Activated B cell treated with CpG ODN at 0.5 μM for 24 hours (primary cell): ENCODE measurements at regions of chr15 and their contacts with region 1.

Region 1: DNA sequence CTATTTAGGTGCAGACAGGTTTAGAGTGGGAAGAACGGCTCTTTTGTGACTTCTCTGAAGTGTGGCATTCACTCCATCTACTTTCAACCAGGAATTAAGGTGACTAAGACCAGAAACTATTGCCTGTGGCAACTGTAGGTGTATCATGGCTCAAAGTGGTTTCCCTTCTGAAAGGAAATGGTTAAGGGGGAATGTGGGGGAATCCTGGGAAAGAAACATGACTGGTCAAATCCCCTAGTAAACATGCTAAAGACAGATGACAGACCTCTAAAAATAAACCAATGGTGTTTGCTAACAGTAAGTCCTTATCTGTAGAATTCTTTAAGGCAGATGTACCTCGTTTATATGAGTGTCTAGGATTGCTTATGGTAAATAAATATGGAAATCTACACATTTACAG is 56.9 kb downstream of the MEGF11 start:
- DNase-seq: no peak
- ATAC-seq: no peak
- H3K4me3 Mint-ChIP-seq: no peak overlapping the region
- H3K27ac Mint-ChIP-seq: no peak overlapping the region
- H3K4me1 Mint-ChIP-seq: no peaks in the 10 kb centered on the region
- H3K27me3 Mint-ChIP-seq: peaks cover 10% of the 10 kb centered on the region
- CTCF ChIP-seq: no peak

Region 2: GRCh38 chr15:65655026-65655425 is 541.6 kb before region 1 on chr15:
- CTCF ChIA-PET with region 1: no interaction called
- POLR2A ChIA-PET with region 1: no interaction called
- intact Hi-C with region 1: no loop called
- DNase-seq: no peak
- ATAC-seq: no peak
- H3K4me3 Mint-ChIP-seq: no peak overlapping the region
- H3K27ac Mint-ChIP-seq: no peak overlapping the region
- H3K4me1 Mint-ChIP-seq: peaks cover 15% of the 10 kb centered on the region
- H3K27me3 Mint-ChIP-seq: no peaks in the 10 kb centered on the region
- CTCF ChIP-seq: no peak

Region 3: DNA sequence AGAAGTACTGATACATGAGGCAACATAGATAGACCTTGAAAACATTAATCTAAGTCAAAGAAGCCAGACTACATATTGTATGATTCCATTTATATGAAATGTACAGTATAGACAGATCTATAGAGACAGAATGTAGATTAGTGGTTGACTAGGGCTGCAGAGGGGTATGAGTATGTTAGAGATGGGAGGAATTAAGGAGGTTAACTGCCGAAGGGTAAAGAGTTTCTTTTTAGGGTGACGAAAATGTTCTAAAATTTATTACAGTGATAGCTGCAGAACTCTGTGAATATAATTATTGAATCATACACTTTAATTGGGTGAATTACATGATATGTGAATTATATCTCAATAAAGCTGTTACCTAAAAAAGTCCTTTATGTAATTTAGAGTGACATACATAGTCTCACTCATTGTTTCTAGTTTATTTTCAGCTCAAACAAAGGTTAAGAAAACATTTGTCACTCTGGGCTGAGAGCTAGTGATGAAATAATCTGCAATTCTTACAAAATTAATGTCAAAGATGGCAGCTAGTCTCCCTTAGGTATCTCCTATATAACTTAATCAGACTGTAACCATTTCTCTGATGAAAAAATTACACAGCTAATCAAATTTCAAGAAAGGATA is 465.9 kb before region 1 on chr15:
- CTCF ChIA-PET with region 1: no interaction called
- POLR2A ChIA-PET with region 1: no interaction called
- intact Hi-C with region 1: loop called (anchors 10 kb)
- DNase-seq: no peak
- ATAC-seq: no peak
- H3K4me3 Mint-ChIP-seq: no peak overlapping the region
- H3K27ac Mint-ChIP-seq: no peak overlapping the region
- H3K4me1 Mint-ChIP-seq: no peaks in the 10 kb centered on the region
- H3K27me3 Mint-ChIP-seq: no peaks in the 10 kb centered on the region
- CTCF ChIP-seq: no peak

Region 4: GRCh38 chr15:65856821-65857455 is 339.7 kb before region 1 on chr15:
- CTCF ChIA-PET with region 1: no interaction called
- POLR2A ChIA-PET with region 1: interaction called, 13 read pairs
- intact Hi-C with region 1: no loop called
- DNase-seq: peak; percentile 47
- ATAC-seq: peak; percentile 82
- H3K4me3 Mint-ChIP-seq: no peak overlapping the region
- H3K27ac Mint-ChIP-seq: no peak overlapping the region
- H3K4me1 Mint-ChIP-seq: peaks cover 14% of the 10 kb centered on the region
- H3K27me3 Mint-ChIP-seq: no peaks in the 10 kb centered on the region
- CTCF ChIP-seq: peak; percentile 81

Region 5: DNA sequence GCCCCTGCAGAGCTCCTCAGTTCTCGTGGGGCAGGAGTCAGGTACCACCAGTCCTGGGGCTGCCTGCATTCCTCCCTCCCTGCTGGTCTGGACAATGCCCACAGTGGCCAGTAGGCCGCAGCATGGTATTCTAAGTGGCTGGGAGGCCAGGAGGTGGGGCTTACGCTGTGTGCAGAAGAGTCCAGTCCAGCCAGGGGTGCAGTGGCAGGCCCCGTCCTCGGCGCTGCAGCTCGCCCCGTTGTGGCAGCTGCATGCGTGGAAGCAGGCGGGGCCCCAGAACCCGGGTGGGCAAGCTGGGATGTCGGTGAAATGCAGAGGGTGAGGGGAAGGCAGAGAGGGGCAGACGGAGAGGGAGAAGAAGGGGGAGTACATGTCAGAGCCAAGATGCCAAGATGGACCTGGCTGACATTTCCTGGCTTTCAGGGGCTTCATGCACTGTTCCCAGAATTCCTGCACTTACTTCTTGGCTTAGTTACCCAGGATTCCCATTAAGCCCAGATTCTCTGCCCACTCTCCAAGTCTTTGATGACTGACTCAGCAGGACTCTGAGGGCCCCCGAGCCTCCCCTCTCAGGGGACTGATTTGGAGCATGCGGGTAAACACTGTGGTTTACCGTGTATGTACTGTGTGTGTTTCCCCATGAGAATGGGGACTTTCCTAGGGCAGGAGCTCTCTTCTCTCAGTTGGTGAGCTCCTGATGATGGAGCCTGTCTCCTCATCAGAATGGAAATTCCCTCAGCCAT is 279.8 kb before region 1 on chr15:
- CTCF ChIA-PET with region 1: no interaction called
- POLR2A ChIA-PET with region 1: no interaction called
- intact Hi-C with region 1: loop called (anchors 5 kb)
- DNase-seq: peak; percentile 64
- ATAC-seq: peak; percentile 91
- H3K4me3 Mint-ChIP-seq: peak overlapping the region; percentile 69
- H3K27ac Mint-ChIP-seq: peak overlapping the region; percentile 64
- H3K4me1 Mint-ChIP-seq: peaks cover 72% of the 10 kb centered on the region
- H3K27me3 Mint-ChIP-seq: no peaks in the 10 kb centered on the region
- CTCF ChIP-seq: no peak

Region 6: DNA sequence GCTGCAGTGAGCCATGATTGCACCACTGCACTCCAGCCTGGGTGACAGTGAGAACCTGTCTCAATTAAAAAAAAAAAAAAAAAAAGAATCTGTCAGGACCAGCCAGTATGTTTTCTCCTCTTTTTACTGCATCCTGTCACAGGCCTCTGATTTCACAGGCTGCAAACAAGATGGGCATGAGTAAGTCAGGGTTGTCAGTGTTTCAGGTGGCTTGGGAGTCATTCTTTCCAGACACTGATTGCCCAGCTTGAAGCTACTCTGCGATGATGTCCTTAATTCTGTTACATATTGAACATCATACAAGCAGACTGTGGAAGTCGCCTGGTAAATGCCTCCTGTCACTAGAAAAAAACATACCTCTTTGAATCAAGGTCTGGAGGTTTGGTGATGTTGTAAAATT is 115.5 kb after region 1 on chr15:
- CTCF ChIA-PET with region 1: no interaction called
- POLR2A ChIA-PET with region 1: no interaction called
- intact Hi-C with region 1: no loop called
- DNase-seq: no peak
- ATAC-seq: no peak
- H3K4me3 Mint-ChIP-seq: no peak overlapping the region
- H3K27ac Mint-ChIP-seq: no peak overlapping the region
- H3K4me1 Mint-ChIP-seq: no peaks in the 10 kb centered on the region
- H3K27me3 Mint-ChIP-seq: no peaks in the 10 kb centered on the region
- CTCF ChIP-seq: no peak